Activated T-helper 1 cell treated with anti-CD3 and anti-CD28 coated beads, Interleukin-12 subunit alpha, Interleukin-12 subunit beta, Interleukin-2, Interleukin-4 antibody, amounts not matched to agents 30 ng/mL and 10 ng/mL and 1 ng/mL, durations not matched to agents 14 hours and 24 hours and 36 hours (primary cell): ENCODE measurements at regions of chr19 and their contacts with region 1.

Region 1: GRCh38 chr19:57682226-57682766 is 519 bp downstream of the ZNF551 start:
- DNase-seq: no peak
- H3K4me3 Mint-ChIP-seq: peak overlapping the region; percentile 96
- H3K27ac Mint-ChIP-seq: peak overlapping the region; percentile 92
- H3K4me1 Mint-ChIP-seq: peaks cover 22% of the 10 kb centered on the region
- H3K27me3 Mint-ChIP-seq: no peaks in the 10 kb centered on the region

Region 2: GRCh38 chr19:57362997-57363705 is 319.1 kb before region 1 on chr19 and contains the starts of genes TRAPPC2B and ZNF547:
- intact Hi-C with region 1: loop called (anchors 1 kb)
- DNase-seq: peak; percentile 98
- H3K4me3 Mint-ChIP-seq: peak within 1 kb of the TSS; percentile 89
- H3K27ac Mint-ChIP-seq: peak within 1 kb of the TSS; percentile 97
- H3K4me1 Mint-ChIP-seq: peaks cover 17% of the 10 kb centered on the region
- H3K27me3 Mint-ChIP-seq: no peaks in the 10 kb centered on the region
- total RNA-seq, gene TRAPPC2B: 3.8 and 4.7 TPM in 2 replicates
- total RNA-seq, gene ZNF547: 0.69 and 0.93 TPM in 2 replicates

Region 3: GRCh38 chr19:57527136-57527881 is 155.0 kb before region 1 on chr19 and contains the start of gene ZNF549:
- intact Hi-C with region 1: loop called (anchors 1 kb)
- DNase-seq: peak; percentile 85
- H3K4me3 Mint-ChIP-seq: peak within 1 kb of the TSS; percentile 93
- H3K27ac Mint-ChIP-seq: peak within 1 kb of the TSS; percentile 76
- H3K4me1 Mint-ChIP-seq: peaks cover 20% of the 10 kb centered on the region
- H3K27me3 Mint-ChIP-seq: peaks cover 2% of the 10 kb centered on the region
- total RNA-seq, gene ZNF549: 3.6 and 4.2 TPM in 2 replicates

Region 4: GRCh38 chr19:57620673-57621199 is 61.6 kb before region 1 on chr19:
- intact Hi-C with region 1: no loop called
- DNase-seq: no peak
- H3K4me3 Mint-ChIP-seq: no peak overlapping the region
- H3K27ac Mint-ChIP-seq: no peak overlapping the region
- H3K4me1 Mint-ChIP-seq: no peaks in the 10 kb centered on the region
- H3K27me3 Mint-ChIP-seq: no peaks in the 10 kb centered on the region

Region 5: DNA sequence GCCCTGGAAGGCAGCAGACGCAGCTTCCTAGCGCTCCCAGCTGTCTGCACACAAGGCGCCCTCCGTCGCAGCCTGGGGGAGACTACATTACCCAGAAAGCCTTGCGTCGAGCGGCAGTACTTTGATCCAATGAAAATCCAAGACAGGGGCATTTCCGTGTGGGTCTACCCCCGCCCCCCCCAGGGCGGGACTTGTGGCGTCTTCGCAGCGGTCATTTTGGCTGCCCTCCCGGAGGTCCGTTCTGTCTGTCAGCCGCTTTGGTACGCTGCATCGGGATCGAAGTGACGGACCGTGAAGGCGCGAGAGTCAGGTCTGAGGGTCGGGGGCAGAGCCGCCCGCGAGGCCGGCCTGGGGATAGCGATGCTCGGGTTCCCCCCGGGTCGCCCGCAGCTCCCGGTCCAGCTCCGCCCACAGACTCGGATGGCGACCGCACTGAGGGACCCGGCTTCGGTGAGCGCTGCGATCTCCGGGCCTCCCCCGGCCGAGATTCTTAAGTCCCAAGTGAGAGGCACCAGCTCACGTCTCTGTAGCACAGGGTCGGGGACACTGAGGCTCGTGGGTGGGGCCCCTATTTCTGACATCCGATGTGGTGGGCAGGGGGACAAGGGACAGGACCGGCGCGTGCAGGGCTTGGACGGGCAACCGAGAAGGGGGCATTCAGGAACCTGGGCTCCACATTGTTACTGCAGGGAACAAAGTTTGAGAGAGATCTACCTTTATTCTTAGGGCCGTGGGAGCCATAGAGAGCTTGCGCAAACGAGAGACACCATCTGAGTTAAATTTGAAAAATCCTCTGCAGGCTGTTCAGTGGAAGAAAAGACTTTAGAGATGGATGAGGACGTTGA is 49.1 kb before region 1 on chr19 and contains the start of gene ZNF211:
- intact Hi-C with region 1: loop called (anchors 1 kb)
- DNase-seq: peak; percentile 80
- H3K4me3 Mint-ChIP-seq: peak within 1 kb of the TSS; percentile 89
- H3K27ac Mint-ChIP-seq: peak within 1 kb of the TSS; percentile 78
- H3K4me1 Mint-ChIP-seq: peaks cover 19% of the 10 kb centered on the region
- H3K27me3 Mint-ChIP-seq: no peaks in the 10 kb centered on the region
- total RNA-seq, gene ZNF211: 8.3 and 8.4 TPM in 2 replicates

Region 6: GRCh38 chr19:57719901-57720519 is 37.7 kb after region 1 on chr19:
- intact Hi-C with region 1: no loop called
- DNase-seq: no peak
- H3K4me3 Mint-ChIP-seq: no peak overlapping the region
- H3K27ac Mint-ChIP-seq: no peak overlapping the region
- H3K4me1 Mint-ChIP-seq: no peaks in the 10 kb centered on the region
- H3K27me3 Mint-ChIP-seq: no peaks in the 10 kb centered on the region

Region 7: GRCh38 chr19:57769345-57770131 is 87.2 kb after region 1 on chr19 and contains the start of gene ZNF586:
- intact Hi-C with region 1: loop called (anchors 1 kb)
- DNase-seq: peak; percentile 85
- H3K4me3 Mint-ChIP-seq: peak within 1 kb of the TSS; percentile 94
- H3K27ac Mint-ChIP-seq: peak within 1 kb of the TSS; percentile 89
- H3K4me1 Mint-ChIP-seq: peaks cover 24% of the 10 kb centered on the region
- H3K27me3 Mint-ChIP-seq: no peaks in the 10 kb centered on the region
- total RNA-seq, gene ZNF586: 13.6 and 13.8 TPM in 2 replicates

Region 8: DNA sequence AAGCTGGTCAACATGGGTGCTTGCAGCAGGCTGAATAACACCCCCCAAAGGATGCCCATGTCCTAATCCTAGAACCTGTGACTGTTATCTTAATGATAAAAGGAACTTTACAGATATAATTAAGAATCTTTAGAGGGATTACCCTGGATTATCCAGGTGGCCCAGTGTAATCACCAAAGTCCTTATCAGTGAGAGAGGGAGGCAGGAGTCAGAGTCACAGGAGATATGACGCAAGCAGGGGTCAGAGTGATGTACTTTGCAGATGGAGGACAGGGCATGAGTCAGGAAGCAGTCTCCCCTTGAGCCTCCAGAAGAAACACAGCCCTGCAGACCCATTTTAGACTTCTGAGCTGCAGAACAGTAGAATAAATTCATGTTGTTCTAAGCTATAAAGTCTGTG is 310.5 kb after region 1 on chr19:
- intact Hi-C with region 1: no loop called
- DNase-seq: no peak
- H3K4me3 Mint-ChIP-seq: no peak overlapping the region
- H3K27ac Mint-ChIP-seq: no peak overlapping the region
- H3K4me1 Mint-ChIP-seq: no peaks in the 10 kb centered on the region
- H3K27me3 Mint-ChIP-seq: no peaks in the 10 kb centered on the region

Region 9: DNA sequence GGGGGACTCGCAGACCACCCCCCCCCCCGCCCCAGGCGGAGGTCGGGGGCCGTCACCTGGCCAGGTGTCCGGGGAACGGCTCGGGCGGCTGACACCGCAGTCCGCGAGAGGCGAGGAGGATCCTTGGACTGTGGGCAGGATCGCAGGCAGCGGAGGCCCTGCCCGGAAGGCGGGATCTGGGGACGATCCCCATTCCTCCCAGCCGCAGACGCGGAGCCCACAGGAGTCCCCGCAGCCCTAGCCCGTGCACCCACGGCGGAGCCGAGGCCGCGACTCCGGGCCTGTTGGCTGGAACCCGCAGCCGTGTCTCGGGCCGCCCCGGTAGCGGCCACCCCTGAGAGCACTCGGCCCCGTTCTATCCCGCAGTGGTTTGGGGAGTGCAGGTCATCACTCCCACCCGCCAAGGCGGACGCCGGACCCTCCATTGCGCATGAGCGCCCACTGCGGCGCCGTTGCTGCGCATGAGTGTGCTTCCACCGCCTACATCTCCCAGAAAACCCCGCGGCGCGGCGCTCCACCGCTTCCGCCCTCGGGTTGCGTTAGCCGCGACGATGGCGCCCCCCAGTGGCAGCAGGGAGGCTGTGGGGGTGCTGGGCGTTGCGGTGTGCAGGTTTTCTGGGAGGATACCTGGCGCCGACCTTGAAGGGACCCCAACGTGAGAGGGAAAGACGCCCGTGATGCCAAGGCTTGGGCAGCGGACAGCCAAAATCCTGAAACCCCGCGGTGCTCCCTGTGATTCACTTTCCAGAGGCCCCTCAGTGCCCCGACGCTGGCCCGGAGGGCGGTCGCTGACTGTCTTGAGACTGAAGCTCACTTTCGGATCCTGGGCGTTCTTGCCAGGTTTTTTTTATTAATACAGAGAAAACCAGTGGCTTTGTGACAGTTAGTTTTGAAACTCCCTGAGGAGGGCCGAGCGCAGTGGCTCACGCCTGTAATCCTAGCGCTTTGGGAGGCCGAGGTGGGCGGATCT is 472.7 kb after region 1 on chr19:
- intact Hi-C with region 1: loop called (anchors 1 kb)
- DNase-seq: peak; percentile 89
- H3K4me3 Mint-ChIP-seq: peak overlapping the region; percentile 76
- H3K27ac Mint-ChIP-seq: peak overlapping the region; percentile 55
- H3K4me1 Mint-ChIP-seq: peaks cover 4% of the 10 kb centered on the region
- H3K27me3 Mint-ChIP-seq: no peaks in the 10 kb centered on the region